Activated naive CD4-positive, alpha-beta T cell treated with anti-CD3 and anti-CD28 coated beads, Interleukin-2, amount 10 ng/mL, durations not matched to agents 7 days and 5 days (primary cell): ENCODE measurements at regions of chr14 and their contacts with region 1.

Region 1: GRCh38 chr14:106417224-106418049 is 891.1 kb downstream of the TMEM121 start:
- DNase-seq: peak; percentile 90
- H3K4me3 Mint-ChIP-seq: no peak overlapping the region
- H3K27ac Mint-ChIP-seq: peak overlapping the region; percentile 33
- H3K4me1 Mint-ChIP-seq: no peaks in the 10 kb centered on the region
- H3K27me3 Mint-ChIP-seq: peaks cover 30% of the 10 kb centered on the region

Region 2: GRCh38 chr14:106218174-106218573 is 199.3 kb before region 1 on chr14:
- CTCF ChIA-PET with region 1: no interaction called
- DNase-seq: no peak
- H3K4me3 Mint-ChIP-seq: no peak overlapping the region
- H3K27ac Mint-ChIP-seq: no peak overlapping the region
- H3K4me1 Mint-ChIP-seq: peaks cover 18% of the 10 kb centered on the region
- H3K27me3 Mint-ChIP-seq: peaks cover 16% of the 10 kb centered on the region

Region 3: DNA sequence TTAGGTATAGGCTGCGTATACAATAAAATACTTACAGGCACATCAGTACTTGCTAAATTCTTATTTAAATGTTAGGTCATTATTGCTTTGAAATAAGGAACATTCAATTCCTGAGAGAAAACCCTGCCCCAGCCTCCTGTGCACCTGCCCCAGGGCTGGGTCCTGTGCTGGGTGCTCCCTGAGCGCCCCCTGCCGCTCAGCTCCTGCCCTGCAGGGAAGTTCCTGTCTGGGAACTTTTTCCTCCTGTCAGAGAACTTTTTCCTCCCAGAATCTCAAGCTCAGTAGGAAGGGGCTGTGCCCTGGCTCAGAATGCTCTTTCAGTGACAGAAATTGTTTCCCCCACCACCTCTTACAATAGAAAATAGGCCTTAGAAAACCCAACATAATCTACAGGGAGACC is 139.9 kb before region 1 on chr14:
- CTCF ChIA-PET with region 1: interaction called, 13 read pairs
- DNase-seq: peak; percentile 34
- H3K4me3 Mint-ChIP-seq: no peak overlapping the region
- H3K27ac Mint-ChIP-seq: no peak overlapping the region
- H3K4me1 Mint-ChIP-seq: peaks cover 9% of the 10 kb centered on the region
- H3K27me3 Mint-ChIP-seq: peaks cover 52% of the 10 kb centered on the region

Region 4: DNA sequence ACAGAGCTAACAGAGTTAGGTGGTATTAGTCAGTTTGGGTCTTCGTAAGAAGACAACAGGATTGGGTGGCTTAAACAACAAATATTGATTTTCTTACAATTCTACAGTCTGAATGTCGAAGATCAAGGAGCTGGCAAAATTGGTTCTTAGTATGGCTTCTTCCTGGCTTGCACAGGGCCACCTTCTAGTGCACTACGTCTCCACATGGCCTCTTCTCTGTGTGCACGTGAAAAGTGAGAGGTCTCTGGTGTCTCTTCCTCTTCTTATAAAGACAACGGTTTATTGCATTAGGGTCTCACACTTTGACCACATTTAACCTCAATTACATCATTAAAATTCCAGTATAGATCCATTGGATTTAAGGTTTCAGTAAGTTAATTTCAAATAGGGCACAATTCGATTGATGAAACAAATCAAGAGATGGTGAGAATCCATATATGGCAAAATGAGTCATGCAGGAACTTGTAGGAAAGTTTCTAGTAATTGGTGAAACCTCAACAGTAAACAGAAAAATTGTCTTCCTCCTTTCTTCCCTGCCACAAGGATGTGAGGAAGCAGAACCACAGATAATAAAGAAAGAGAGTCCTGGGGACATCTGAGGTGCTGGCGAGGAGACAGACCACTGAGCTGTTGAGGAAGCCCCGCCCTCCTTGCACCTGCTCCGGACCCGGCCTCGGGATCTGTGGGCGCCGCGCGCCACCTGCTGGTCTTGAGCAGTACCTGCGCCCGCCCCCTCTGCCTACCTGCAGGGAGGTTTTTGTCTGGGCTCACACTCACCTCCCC is 44.4 kb before region 1 on chr14:
- CTCF ChIA-PET with region 1: interaction called, 71 read pairs
- DNase-seq: peak; percentile 87
- H3K4me3 Mint-ChIP-seq: no peak overlapping the region
- H3K27ac Mint-ChIP-seq: peak overlapping the region; percentile 8
- H3K4me1 Mint-ChIP-seq: peaks cover 24% of the 10 kb centered on the region
- H3K27me3 Mint-ChIP-seq: peaks cover 26% of the 10 kb centered on the region

Region 5: GRCh38 chr14:106395456-106396050 is 21.9 kb before region 1 on chr14:
- CTCF ChIA-PET with region 1: interaction called, 39 read pairs
- DNase-seq: no peak
- H3K4me3 Mint-ChIP-seq: peak overlapping the region; percentile 17
- H3K27ac Mint-ChIP-seq: peak overlapping the region; percentile 75
- H3K4me1 Mint-ChIP-seq: peaks cover 33% of the 10 kb centered on the region
- H3K27me3 Mint-ChIP-seq: peaks cover 24% of the 10 kb centered on the region

Region 6: DNA sequence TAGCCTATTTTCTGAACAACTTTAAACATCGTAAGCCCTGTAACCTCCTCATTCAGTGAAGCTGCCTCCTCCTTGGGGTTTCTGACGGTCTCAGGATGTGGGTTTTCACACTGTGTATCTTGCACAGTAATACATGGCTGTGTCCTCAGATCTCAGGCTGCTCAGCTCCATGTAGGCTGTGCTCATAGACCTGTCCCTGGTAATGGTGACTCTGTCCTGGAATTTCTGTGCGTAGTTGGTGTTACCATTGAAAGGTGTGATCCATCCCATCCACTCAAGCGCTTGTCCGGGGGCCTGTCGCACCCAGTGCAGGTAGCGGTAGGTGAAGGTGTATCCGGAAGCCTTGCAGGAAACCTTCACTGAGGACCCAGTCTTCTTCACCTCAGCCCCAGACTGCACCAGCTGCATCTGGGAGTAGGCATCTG is 89.5 kb after region 1 on chr14:
- CTCF ChIA-PET with region 1: interaction called, 18 read pairs
- DNase-seq: peak; percentile 70
- H3K4me3 Mint-ChIP-seq: peak overlapping the region; percentile 63
- H3K27ac Mint-ChIP-seq: peak overlapping the region; percentile 93
- H3K4me1 Mint-ChIP-seq: peaks cover 61% of the 10 kb centered on the region
- H3K27me3 Mint-ChIP-seq: peaks cover 21% of the 10 kb centered on the region

Region 7: GRCh38 chr14:106665814-106666213 is 248.4 kb after region 1 on chr14:
- CTCF ChIA-PET with region 1: interaction called, 30 read pairs
- DNase-seq: no peak
- H3K4me3 Mint-ChIP-seq: no peak overlapping the region
- H3K27ac Mint-ChIP-seq: no peak overlapping the region
- H3K4me1 Mint-ChIP-seq: peaks cover 9% of the 10 kb centered on the region
- H3K27me3 Mint-ChIP-seq: peaks cover 30% of the 10 kb centered on the region